ENCODE measurements at regions of chr1 and their contacts with region 1.

Region 1: GRCh38 chr1:222465211-222466041 is 82.5 kb downstream of the HHIPL2 start:
- DNase-seq: peak; percentile 73
- H3K4me3 Mint-ChIP-seq: peak overlapping the region; percentile 82
- H3K27ac Mint-ChIP-seq: peak overlapping the region; percentile 84
- H3K4me1 Mint-ChIP-seq: peaks cover 12% of the 10 kb centered on the region
- H3K27me3 Mint-ChIP-seq: peaks cover 27% of the 10 kb centered on the region

Region 2: DNA sequence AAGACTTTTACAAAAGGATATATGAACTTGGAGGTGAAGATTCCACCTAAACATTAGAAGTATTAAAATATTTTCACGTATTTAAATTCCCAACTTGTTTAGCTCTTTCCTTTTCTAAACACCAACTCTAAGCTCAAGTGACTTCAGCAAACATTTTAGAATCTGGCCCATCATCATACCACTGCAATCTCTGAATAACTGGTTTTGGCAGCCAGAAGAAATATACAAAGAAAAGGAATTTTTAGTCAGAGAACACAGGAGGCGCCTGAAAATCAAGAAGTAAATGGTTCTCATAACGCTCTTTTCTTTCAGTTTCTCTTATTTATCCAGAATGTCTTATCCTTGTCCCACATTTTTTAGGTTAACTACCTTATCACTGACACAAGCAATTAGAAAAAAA is 113.9 kb after region 1 on chr1:
- intact Hi-C with region 1: no loop called
- DNase-seq: no peak
- H3K4me3 Mint-ChIP-seq: no peak overlapping the region
- H3K27ac Mint-ChIP-seq: no peak overlapping the region
- H3K4me1 Mint-ChIP-seq: no peaks in the 10 kb centered on the region
- H3K27me3 Mint-ChIP-seq: no peaks in the 10 kb centered on the region

Region 3: GRCh38 chr1:222589462-222590302 is 124.3 kb after region 1 on chr1 and contains the start of gene TAF1A:
- intact Hi-C with region 1: loop called (anchors 2 kb)
- DNase-seq: peak; percentile 77
- H3K4me3 Mint-ChIP-seq: peak within 1 kb of the TSS; percentile 92
- H3K27ac Mint-ChIP-seq: peak within 1 kb of the TSS; percentile 88
- H3K4me1 Mint-ChIP-seq: peaks cover 37% of the 10 kb centered on the region
- H3K27me3 Mint-ChIP-seq: peaks cover 6% of the 10 kb centered on the region
- total RNA-seq, gene TAF1A: 19.2 and 19.7 TPM in 2 replicates

Region 4: DNA sequence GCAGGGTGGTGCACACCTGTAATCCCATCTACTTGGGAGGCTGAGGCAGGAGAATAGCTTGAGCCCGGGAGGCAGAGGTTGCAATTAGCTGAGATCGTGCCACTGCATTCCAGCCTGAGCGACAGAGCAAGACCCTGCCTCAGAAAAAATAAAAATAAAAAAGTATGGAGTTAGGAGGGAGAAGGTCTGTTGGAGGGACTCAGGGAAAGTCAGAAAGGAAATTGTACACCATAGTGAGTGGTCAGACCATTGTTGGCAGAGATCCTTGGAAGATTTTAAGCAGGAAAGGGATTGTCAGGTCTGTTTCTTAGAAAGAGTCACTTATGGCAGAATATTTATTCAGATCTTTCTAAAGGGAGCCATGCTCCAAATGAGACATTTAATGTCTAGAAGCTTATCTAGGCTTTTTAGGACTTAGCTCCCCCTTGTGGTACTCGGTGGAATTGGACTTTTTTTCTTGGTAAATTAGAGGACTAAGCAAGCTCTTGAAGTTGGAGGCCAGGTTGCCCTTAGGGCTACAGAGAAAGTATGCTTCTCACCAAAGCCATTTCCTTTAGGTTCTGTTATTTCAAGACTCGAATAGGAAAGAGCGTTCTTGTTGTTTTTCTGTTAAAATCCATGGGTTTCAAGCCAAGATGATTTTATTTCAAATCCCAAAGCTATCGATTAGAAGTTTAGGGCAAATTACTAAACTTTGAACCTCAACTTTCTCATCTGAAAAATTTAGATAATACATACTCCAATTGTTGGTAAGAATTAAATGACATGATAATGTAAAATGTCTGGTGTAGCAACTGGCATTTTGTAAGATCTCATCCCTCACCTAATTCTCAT is 169.0 kb after region 1 on chr1:
- intact Hi-C with region 1: loop called (anchors 1 kb)
- DNase-seq: peak; percentile 59
- H3K4me3 Mint-ChIP-seq: no peak overlapping the region
- H3K27ac Mint-ChIP-seq: no peak overlapping the region
- H3K4me1 Mint-ChIP-seq: peaks cover 14% of the 10 kb centered on the region
- H3K27me3 Mint-ChIP-seq: no peaks in the 10 kb centered on the region

Region 5: GRCh38 chr1:222713091-222713961 is 247.9 kb after region 1 on chr1:
- intact Hi-C with region 1: loop called (anchors 1 kb)
- DNase-seq: peak; percentile 85
- H3K4me3 Mint-ChIP-seq: peak overlapping the region; percentile 94
- H3K27ac Mint-ChIP-seq: peak overlapping the region; percentile 99
- H3K4me1 Mint-ChIP-seq: peaks cover 57% of the 10 kb centered on the region
- H3K27me3 Mint-ChIP-seq: no peaks in the 10 kb centered on the region

Region 6: GRCh38 chr1:222814536-222815439 is 349.4 kb after region 1 on chr1 and contains the start of gene DISP1:
- intact Hi-C with region 1: loop called (anchors 1 kb)
- DNase-seq: peak; percentile 68
- H3K4me3 Mint-ChIP-seq: peak within 1 kb of the TSS; percentile 90
- H3K27ac Mint-ChIP-seq: peak within 1 kb of the TSS; percentile 93
- H3K4me1 Mint-ChIP-seq: peaks cover 33% of the 10 kb centered on the region
- H3K27me3 Mint-ChIP-seq: peaks cover 12% of the 10 kb centered on the region
- total RNA-seq, gene DISP1: 1.0 and 1.2 TPM in 2 replicates

Region 7: DNA sequence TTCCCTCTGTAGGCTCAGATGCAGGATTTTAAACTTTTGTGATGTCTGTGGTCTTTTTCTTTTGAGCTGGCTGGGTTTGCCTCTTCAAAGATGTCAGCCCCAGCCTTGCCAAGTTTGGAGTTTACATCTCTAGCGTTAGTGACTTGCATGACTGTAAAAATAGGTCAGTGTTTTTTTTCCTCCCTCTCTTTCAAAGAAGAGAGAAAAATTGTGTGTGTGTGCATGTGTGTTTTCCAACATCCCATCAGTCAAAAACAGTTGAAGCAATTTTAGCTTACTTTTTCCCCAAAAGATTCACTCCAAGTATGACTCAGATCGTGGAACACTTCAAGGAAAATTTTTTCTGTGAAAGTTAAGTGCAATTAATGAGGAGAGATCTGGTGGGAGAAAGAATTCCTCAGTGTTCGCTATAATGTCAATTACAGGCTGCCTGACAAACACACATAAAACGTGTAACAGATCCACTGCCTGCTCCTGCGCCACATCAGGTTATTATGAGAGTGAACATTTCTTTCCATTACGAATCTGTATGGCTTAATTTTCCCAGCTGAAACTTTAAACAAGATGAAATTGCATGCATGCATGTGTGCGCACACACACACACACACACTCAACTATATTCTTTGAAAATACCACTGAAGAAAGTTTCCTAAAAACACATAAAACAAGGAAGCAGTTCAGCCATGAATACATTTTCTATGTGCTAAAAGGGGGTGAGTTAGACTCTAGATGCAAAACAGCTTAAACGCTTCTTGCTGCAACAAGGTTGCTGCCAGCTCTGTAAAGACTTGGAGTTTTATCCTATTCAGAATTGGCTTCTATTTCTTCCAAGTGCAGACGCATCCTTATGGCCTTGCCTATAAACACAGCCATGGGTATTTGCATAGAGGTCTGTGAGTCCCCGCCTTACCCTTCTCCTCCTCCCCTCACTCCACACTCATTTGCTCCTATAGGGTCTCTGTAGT is 622.1 kb after region 1 on chr1:
- intact Hi-C with region 1: loop called (anchors 1 kb)
- DNase-seq: no peak
- H3K4me3 Mint-ChIP-seq: no peak overlapping the region
- H3K27ac Mint-ChIP-seq: no peak overlapping the region
- H3K4me1 Mint-ChIP-seq: no peaks in the 10 kb centered on the region
- H3K27me3 Mint-ChIP-seq: peaks cover 7% of the 10 kb centered on the region